HCT116 (cell line): ENCODE measurements at regions of chr6 and their contacts with region 1.

Region 1: DNA sequence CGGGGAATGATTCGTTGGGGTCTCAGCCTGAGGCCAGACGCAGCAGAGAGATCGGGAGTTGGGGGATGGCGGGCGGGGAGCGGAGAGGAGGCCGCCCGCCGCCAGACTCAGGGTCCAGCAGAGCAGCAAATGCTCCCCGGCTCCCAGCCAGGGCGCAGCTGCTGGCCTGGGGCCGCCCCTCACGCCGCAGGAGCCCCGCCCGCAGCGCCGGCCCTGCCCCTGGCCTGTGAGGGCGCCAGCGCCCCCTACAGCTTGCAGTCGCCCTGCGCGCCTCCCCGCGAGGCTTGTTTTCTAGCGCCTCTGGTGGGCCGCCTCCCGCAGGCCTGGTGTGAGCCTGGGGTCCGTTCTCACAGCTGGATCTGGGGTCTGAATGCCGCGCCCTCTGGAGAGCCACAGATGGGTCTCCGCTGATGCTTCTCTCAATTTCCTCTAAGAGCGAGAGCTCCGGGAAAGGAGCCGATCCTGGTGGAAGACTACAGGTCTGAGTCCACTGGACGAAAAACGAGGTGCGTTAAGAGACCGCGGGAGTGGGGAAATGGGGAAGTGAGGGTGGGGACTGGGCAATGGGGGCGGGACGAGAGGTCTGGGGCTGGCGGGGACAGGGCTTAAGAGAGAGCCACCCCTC is 29.9 kb downstream of the TRIM38 start:
- DNase-seq: peak; percentile 78
- ATAC-seq: peak; percentile 92
- H3K4me3 ChIP-seq: peak overlapping the region; percentile 64 to 65
- H3K27ac ChIP-seq: peak overlapping the region; percentile 55
- H3K4me1 ChIP-seq: peaks cover 6 to 15% of the 10 kb centered on the region in 2 experiments; a peak in 3 of 4 replicates
- H3K27me3 ChIP-seq: no peaks in the 10 kb centered on the region
- CTCF ChIP-seq: peak; percentile 98 to 99 (median 99)
- POLR2A ChIP-seq: peak; percentile 61
- RAD21 ChIP-seq: peak; percentile 73

Region 2: GRCh38 chr6:25962149-25963127 is 30.1 kb before region 1 on chr6 and contains the start of gene TRIM38:
- CTCF ChIA-PET with region 1: interaction called, 15 read pairs
- POLR2A ChIA-PET with region 1: interaction called, 5 read pairs
- RAD21 ChIA-PET with region 1: no interaction called
- intact Hi-C with region 1: no loop called
- DNase-seq: peak; percentile 54
- ATAC-seq: peak; percentile 76
- H3K4me3 ChIP-seq: peak within 1 kb of the TSS; percentile 62 to 63
- H3K27ac ChIP-seq: peak within 1 kb of the TSS; percentile 57
- H3K4me1 ChIP-seq: peaks cover 18 to 29% of the 10 kb centered on the region in 2 experiments
- H3K27me3 ChIP-seq: no peaks in the 10 kb centered on the region
- CTCF ChIP-seq: no peak
- POLR2A ChIP-seq: no peak
- RAD21 ChIP-seq: no peak
- total RNA-seq, gene TRIM38: 9.6 TPM

Region 3: DNA sequence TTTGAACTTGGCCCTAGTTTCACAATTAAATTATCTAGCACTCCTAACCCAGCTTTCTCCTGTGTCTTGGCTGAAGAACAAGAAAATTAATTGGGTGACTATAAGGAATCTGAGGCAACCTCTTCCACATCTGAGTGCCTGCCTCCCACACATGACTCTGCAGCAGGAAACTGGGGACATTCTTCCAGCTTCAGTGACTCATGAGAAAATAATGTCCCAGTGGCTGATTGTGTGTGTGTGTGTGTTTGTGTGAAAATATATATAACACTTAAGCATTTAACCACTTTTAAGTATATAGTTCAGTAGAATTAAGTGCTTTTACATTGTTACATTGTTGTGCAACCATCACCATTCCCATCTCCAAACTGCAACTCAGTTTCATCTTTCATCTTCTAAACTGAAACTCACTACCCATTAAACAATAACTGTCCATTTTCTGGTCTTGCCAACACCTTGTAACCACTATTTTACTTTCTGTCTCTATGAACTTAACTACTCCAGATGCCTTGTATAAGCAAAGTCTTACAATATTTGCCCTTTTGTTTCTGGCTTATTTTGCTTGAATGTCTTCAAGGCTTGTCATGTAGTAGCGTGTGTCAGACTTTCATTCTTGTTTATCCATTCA is 21.2 kb before region 1 on chr6:
- CTCF ChIA-PET with region 1: interaction called, 13 read pairs
- POLR2A ChIA-PET with region 1: interaction called, 5 read pairs
- RAD21 ChIA-PET with region 1: no interaction called
- intact Hi-C with region 1: no loop called
- DNase-seq: peak; percentile 73
- ATAC-seq: peak; percentile 93
- H3K4me3 ChIP-seq: peak overlapping the region in 1 of 2 experiments; percentile 39; a peak in 2 of 4 replicates
- H3K27ac ChIP-seq: peak overlapping the region; percentile 59; the same call in 1 of the 2 replicates
- H3K4me1 ChIP-seq: peaks cover 16 to 19% of the 10 kb centered on the region in 2 experiments
- H3K27me3 ChIP-seq: no peaks in the 10 kb centered on the region
- CTCF ChIP-seq: no peak
- POLR2A ChIP-seq: no peak
- RAD21 ChIP-seq: no peak

Region 4: GRCh38 chr6:25981568-25982263 is 10.8 kb before region 1 on chr6:
- CTCF ChIA-PET with region 1: interaction called, 15 read pairs
- POLR2A ChIA-PET with region 1: interaction called, 4 read pairs
- RAD21 ChIA-PET with region 1: no interaction called
- intact Hi-C with region 1: no loop called
- DNase-seq: no peak
- ATAC-seq: no peak
- H3K4me3 ChIP-seq: no peak overlapping the region
- H3K27ac ChIP-seq: no peak overlapping the region
- H3K4me1 ChIP-seq: no peaks in the 10 kb centered on the region
- H3K27me3 ChIP-seq: no peaks in the 10 kb centered on the region
- CTCF ChIP-seq: no peak
- POLR2A ChIP-seq: no peak
- RAD21 ChIP-seq: no peak

Region 5: GRCh38 chr6:26003102-26003694 is 10.7 kb after region 1 on chr6:
- CTCF ChIA-PET with region 1: interaction called, 20 read pairs
- POLR2A ChIA-PET with region 1: interaction called, 8 read pairs
- RAD21 ChIA-PET with region 1: no interaction called
- intact Hi-C with region 1: no loop called
- DNase-seq: no peak
- ATAC-seq: peak; percentile 88
- H3K4me3 ChIP-seq: no peak overlapping the region
- H3K27ac ChIP-seq: no peak overlapping the region
- H3K4me1 ChIP-seq: no peaks in the 10 kb centered on the region
- H3K27me3 ChIP-seq: no peaks in the 10 kb centered on the region
- CTCF ChIP-seq: peak; percentile 51 to 72 (median 64); a peak in 5 of 6 replicates
- POLR2A ChIP-seq: no peak
- RAD21 ChIP-seq: peak; percentile 67